Activated T-helper 2 cell treated with anti-CD3 and anti-CD28 coated beads, Interferon-gamma antibody, Interleukin-2, Interleukin-4, amounts not matched to agents 10 μg/mL and 5 μg/mL and 100 μg/mL, durations not matched to agents 14 hours and 24 hours and 36 hours (primary cell): ENCODE measurements at regions of chr1 and their contacts with region 1.

Region 1: GRCh38 chr1:247103859-247104591 is at the start of gene ZNF669:
- DNase-seq: peak; percentile 88
- H3K4me3 Mint-ChIP-seq: peak within 1 kb of the TSS; percentile 91
- H3K27ac Mint-ChIP-seq: peak within 1 kb of the TSS; percentile 82
- H3K4me1 Mint-ChIP-seq: peaks cover 5% of the 10 kb centered on the region
- H3K27me3 Mint-ChIP-seq: peaks cover 29% of the 10 kb centered on the region
- total RNA-seq, gene ZNF669: 8.2 and 8.7 TPM in 2 replicates

Region 2: GRCh38 chr1:247078261-247079140 is 25.5 kb before region 1 on chr1 and contains the start of gene ZNF670:
- intact Hi-C with region 1: loop called (anchors 1 kb)
- DNase-seq: peak; percentile 84
- H3K4me3 Mint-ChIP-seq: peak within 1 kb of the TSS; percentile 88
- H3K27ac Mint-ChIP-seq: peak within 1 kb of the TSS; percentile 84
- H3K4me1 Mint-ChIP-seq: peaks cover 20% of the 10 kb centered on the region
- H3K27me3 Mint-ChIP-seq: peaks cover 5% of the 10 kb centered on the region
- total RNA-seq, gene ZNF670: 2.3 and 3.0 TPM in 2 replicates

Region 3: DNA sequence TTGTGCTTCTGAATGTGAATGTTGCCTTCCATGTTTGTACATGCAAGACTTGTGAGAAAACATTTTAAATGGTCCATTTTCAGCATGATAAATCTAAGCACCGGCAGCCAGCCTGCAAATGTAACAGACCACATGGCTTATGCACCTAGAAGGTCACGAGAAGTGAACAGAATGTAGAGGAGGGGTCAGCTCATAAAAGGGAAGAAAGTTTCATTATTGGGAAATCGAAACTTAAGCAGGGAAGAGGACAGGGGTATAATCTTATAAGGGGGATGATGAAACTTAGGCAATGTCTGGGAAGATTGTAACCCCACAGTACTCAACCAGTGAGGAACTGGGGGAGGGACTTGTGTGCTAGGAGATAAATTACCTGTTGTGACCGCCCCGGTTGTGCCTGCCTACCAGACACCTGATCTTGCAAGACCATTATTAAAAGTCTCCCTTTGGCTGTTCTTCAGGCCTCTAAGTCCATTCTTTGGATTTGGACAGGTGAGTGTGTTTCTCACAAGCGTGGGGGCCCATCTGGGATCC is 114.2 kb after region 1 on chr1:
- intact Hi-C with region 1: no loop called
- DNase-seq: no peak
- H3K4me3 Mint-ChIP-seq: no peak overlapping the region
- H3K27ac Mint-ChIP-seq: no peak overlapping the region
- H3K4me1 Mint-ChIP-seq: peaks cover 9% of the 10 kb centered on the region
- H3K27me3 Mint-ChIP-seq: peaks cover 3% of the 10 kb centered on the region